ENCODE measurements at regions of chr19 and their contacts with region 1.

Region 1: DNA sequence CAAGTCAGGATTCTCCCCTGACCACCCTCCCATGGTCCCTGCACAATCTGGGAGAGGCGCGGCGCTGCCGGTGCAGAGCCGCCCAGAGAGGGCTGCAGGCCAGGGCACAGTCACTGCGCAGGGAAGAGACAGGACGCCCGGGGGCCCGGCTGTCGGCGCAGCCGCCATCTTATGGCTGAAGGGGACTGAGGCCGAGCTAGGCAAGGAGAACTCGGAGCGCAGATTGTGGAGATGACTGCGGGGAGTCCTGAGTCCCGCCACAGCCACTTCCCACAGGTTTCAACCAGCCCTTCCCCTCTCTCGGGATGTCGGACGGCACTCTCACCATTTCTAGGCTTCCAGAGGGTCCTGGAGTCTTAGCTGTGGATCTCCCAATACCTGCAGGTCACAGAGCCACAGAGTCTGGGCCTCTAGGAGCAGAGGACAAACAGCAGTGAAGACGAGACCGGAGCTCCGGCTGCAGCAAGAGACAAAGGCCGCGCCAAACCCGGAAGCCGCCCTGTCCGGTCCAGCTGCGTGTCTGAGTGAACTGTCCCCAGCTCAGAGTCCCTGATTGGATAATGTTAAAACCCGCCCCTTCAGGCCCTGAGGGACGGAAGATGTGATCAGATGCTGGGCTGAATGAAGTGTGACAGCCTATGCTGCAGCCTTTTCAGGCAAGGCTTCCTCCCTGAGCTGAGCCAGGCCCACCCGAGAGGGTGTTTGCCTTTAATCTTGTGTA is at the start of gene ZNF708:
- DNase-seq: peak; percentile 82
- ATAC-seq: peak; percentile 100
- H3K4me3 ChIP-seq: peak within 1 kb of the TSS; percentile 90
- H3K27ac ChIP-seq: peak within 1 kb of the TSS; percentile 96
- H3K4me1 ChIP-seq: no peaks in the 10 kb centered on the region
- H3K27me3 ChIP-seq: no peaks in the 10 kb centered on the region
- CTCF ChIP-seq: no peak
- EP300 ChIP-seq: no peak
- POLR2A ChIP-seq: peak; percentile 95
- RAD21 ChIP-seq: no peak
- polyA plus RNA-seq, gene ZNF708: 2.7 to 2.9 TPM

Region 2: GRCh38 chr19:21396893-21397572 is 68.0 kb after region 1 on chr19 and contains the start of gene ZNF493:
- CTCF ChIA-PET with region 1: no interaction called
- POLR2A ChIA-PET with region 1: interaction called, 10 read pairs
- RAD21 ChIA-PET with region 1: interaction called, 7 read pairs
- SMC1A ChIA-PET with region 1: no interaction called
- in situ Hi-C with region 1: no loop called
- intact Hi-C with region 1: no loop called
- DNase-seq: peak; percentile 86
- ATAC-seq: peak; percentile 100
- H3K4me3 ChIP-seq: peak within 1 kb of the TSS; percentile 84
- H3K27ac ChIP-seq: peak within 1 kb of the TSS; percentile 80
- H3K4me1 ChIP-seq: no peaks in the 10 kb centered on the region
- H3K27me3 ChIP-seq: no peaks in the 10 kb centered on the region
- CTCF ChIP-seq: no peak
- EP300 ChIP-seq: no peak
- POLR2A ChIP-seq: peak; percentile 92
- RAD21 ChIP-seq: no peak
- polyA plus RNA-seq, gene ZNF493: 2.9 to 3.0 TPM

Region 3: GRCh38 chr19:21463449-21464105 is 134.5 kb after region 1 on chr19:
- CTCF ChIA-PET with region 1: no interaction called
- POLR2A ChIA-PET with region 1: no interaction called
- RAD21 ChIA-PET with region 1: no interaction called
- SMC1A ChIA-PET with region 1: no interaction called
- in situ Hi-C with region 1: no loop called
- intact Hi-C with region 1: no loop called
- DNase-seq: no peak
- ATAC-seq: no peak
- H3K4me3 ChIP-seq: no peak overlapping the region
- H3K27ac ChIP-seq: no peak overlapping the region
- H3K4me1 ChIP-seq: no peaks in the 10 kb centered on the region
- H3K27me3 ChIP-seq: no peaks in the 10 kb centered on the region
- CTCF ChIP-seq: no peak
- EP300 ChIP-seq: no peak
- POLR2A ChIP-seq: no peak
- RAD21 ChIP-seq: no peak

Measured in GM12878 (cell line).